Activated CD4-positive, alpha-beta T cell treated with anti-CD3 and anti-CD28 coated beads for 36 hours (primary cell): ENCODE measurements at regions of chr1 and their contacts with region 1.

Region 1: GRCh38 chr1:41862384-41863174 is 56.1 kb downstream of the HIVEP3 start:
- DNase-seq: peak; percentile 83
- ATAC-seq: peak; percentile 93
- H3K4me3 Mint-ChIP-seq: peak overlapping the region; percentile 9
- H3K27ac Mint-ChIP-seq: peak overlapping the region; percentile 84
- H3K4me1 Mint-ChIP-seq: peaks cover 41% of the 10 kb centered on the region
- H3K27me3 Mint-ChIP-seq: no peaks in the 10 kb centered on the region

Region 2: DNA sequence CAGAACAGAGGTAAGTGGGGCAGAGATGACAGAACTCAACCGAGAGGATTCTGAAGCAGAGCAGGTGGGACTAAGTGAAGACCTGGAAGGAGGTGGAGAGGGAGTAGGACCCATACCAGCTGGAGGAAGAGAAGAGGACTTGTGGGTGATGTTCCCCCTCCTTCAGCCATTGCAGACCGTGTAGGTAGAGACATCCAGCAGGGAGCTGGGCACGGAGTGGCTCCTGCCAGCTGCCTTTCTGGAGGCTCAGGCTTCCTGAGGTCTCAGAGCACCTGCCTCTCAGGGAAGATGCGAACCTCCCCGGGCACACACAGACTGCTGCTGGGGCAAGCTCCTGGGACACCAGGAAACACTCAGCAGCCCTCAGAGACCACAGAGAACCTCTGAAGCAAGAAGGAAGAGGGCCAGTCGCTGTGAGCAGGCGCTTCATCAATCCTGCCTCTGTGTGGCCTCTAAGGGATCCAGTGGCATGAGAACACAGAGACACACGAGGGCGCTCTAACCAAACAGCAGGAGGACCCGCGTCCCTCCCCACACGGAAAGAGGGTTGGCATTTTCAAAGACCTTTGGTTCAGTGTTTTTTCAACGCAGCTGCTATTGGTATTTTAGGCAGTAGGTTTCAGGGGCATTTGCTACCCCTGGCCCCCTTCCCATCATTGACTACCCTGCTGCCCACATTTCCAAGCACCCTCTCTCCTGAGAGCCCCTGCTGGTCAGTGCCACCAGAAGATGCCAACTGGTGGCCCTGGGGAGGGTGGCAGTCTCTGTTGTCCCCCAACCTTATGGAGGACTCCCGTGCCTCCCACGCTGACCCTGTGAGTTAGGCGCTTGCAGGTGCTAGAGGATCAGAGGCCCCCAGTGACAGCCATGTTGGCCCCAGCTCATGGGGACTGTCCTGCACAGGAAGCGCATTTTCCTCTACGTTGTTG is 288.5 kb before region 1 on chr1:
- CTCF ChIA-PET with region 1: interaction called, 4 read pairs
- POLR2A ChIA-PET with region 1: no interaction called
- intact Hi-C with region 1: loop called in 1 of 2 experiments (anchors 2 kb)
- DNase-seq: peak; percentile 90
- ATAC-seq: peak; percentile 93
- H3K4me3 Mint-ChIP-seq: no peak overlapping the region
- H3K27ac Mint-ChIP-seq: peak overlapping the region; percentile 17
- H3K4me1 Mint-ChIP-seq: peaks cover 41% of the 10 kb centered on the region
- H3K27me3 Mint-ChIP-seq: no peaks in the 10 kb centered on the region

Region 3: DNA sequence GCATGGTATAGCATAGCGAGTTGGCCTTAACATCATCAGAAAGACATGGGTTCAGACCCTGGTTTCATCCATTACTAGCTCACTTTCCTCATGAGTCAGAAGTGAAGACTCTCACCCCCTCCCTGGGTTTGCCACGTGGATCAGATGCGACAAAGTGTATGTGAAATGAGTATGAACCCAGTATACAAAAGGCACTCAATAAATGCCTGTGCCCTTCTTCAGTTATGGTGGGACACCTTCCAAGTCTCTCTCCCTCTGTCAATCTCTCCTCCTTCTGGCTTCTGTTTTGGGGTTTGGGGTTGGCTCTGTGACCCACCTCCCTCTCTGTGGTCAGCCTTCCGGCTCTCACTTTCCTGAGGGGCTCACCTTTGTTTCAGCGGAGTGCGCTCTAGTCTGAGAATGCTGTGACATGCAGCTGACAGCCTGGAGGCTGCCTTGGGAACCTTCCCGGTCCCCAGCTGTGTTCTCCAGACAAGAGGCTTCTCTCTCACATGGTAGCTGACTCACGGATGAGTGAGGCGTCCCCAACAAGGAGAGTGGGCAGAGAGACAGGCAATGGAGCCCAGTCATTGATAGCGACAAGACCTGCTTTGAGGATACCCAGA is 223.1 kb before region 1 on chr1:
- CTCF ChIA-PET with region 1: no interaction called
- POLR2A ChIA-PET with region 1: no interaction called
- intact Hi-C with region 1: loop called in 1 of 2 experiments (anchors 1 kb)
- DNase-seq: peak; percentile 84
- ATAC-seq: peak; percentile 83
- H3K4me3 Mint-ChIP-seq: peak overlapping the region; percentile 62
- H3K27ac Mint-ChIP-seq: no peak overlapping the region
- H3K4me1 Mint-ChIP-seq: peaks cover 13% of the 10 kb centered on the region
- H3K27me3 Mint-ChIP-seq: no peaks in the 10 kb centered on the region

Region 4: GRCh38 chr1:41739061-41739955 is 123.3 kb before region 1 on chr1:
- CTCF ChIA-PET with region 1: no interaction called
- POLR2A ChIA-PET with region 1: no interaction called
- intact Hi-C with region 1: loop called in 1 of 2 experiments (anchors 1 kb)
- DNase-seq: peak; percentile 95
- ATAC-seq: peak; percentile 50
- H3K4me3 Mint-ChIP-seq: peak overlapping the region; percentile 58
- H3K27ac Mint-ChIP-seq: peak overlapping the region; percentile 91
- H3K4me1 Mint-ChIP-seq: peaks cover 92% of the 10 kb centered on the region
- H3K27me3 Mint-ChIP-seq: no peaks in the 10 kb centered on the region

Region 5: GRCh38 chr1:41783189-41783639 is 79.4 kb before region 1 on chr1:
- CTCF ChIA-PET with region 1: no interaction called
- POLR2A ChIA-PET with region 1: no interaction called
- intact Hi-C with region 1: loop called in 1 of 2 experiments (anchors 1 kb)
- DNase-seq: peak; percentile 78
- ATAC-seq: peak; percentile 98
- H3K4me3 Mint-ChIP-seq: peak overlapping the region; percentile 64
- H3K27ac Mint-ChIP-seq: peak overlapping the region; percentile 86
- H3K4me1 Mint-ChIP-seq: peaks cover 35% of the 10 kb centered on the region
- H3K27me3 Mint-ChIP-seq: no peaks in the 10 kb centered on the region

Region 6: GRCh38 chr1:41891199-41891896 is 28.8 kb after region 1 on chr1:
- CTCF ChIA-PET with region 1: interaction called, 14 read pairs
- POLR2A ChIA-PET with region 1: interaction called, 3 read pairs
- intact Hi-C with region 1: no loop called
- DNase-seq: peak; percentile 72
- ATAC-seq: peak; percentile 96
- H3K4me3 Mint-ChIP-seq: peak overlapping the region; percentile 78
- H3K27ac Mint-ChIP-seq: peak overlapping the region; percentile 95
- H3K4me1 Mint-ChIP-seq: peaks cover 50% of the 10 kb centered on the region
- H3K27me3 Mint-ChIP-seq: no peaks in the 10 kb centered on the region

Region 7: DNA sequence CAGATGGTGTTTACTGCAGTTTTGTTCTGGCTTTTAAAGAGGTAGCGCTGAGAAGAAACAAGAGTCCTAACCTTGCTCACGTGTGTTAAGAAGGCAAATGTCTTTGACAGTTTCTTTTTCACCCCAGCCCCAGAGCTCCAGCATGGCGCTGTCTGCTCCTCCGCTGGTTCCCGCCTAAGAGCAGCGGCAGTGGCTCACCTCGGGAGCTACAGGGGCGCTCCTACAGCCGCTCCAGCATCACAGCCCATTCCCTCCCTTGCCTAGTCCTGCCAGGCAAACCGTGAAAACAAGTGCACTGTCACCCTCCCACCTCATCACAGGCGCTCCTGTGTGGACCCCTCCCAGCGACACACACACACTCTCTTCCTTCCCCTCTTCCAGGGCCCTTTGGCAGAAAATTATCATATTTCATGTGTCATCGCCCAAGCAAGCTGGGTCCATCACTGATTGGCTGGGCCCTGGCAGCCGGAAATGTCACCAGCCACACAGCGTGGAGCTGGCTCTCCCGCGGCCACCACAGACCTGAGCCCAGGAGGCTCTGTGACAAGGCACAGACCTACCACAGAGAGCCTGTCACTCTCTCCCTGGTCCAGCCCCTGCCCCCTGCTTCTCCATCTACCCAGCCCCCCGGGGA is 57.3 kb after region 1 on chr1:
- CTCF ChIA-PET with region 1: interaction called, 3 read pairs
- POLR2A ChIA-PET with region 1: interaction called, 3 read pairs
- intact Hi-C with region 1: loop called in 1 of 2 experiments (anchors 1 kb)
- DNase-seq: peak; percentile 92
- ATAC-seq: peak; percentile 92
- H3K4me3 Mint-ChIP-seq: peak overlapping the region; percentile 72
- H3K27ac Mint-ChIP-seq: peak overlapping the region; percentile 88
- H3K4me1 Mint-ChIP-seq: peaks cover 57% of the 10 kb centered on the region
- H3K27me3 Mint-ChIP-seq: no peaks in the 10 kb centered on the region